ENCODE measurements at regions of chrX and their contacts with region 1.

Region 1: GRCh38 chrX:69285881-69286564 is 120.8 kb upstream of the PJA1 start:
- DNase-seq: peak; percentile 50 to 69
- ATAC-seq: peak; percentile 60 to 88 (median 62)
- H3K4me3 ChIP-seq: peak overlapping the region; percentile 12
- H3K4me3 Mint-ChIP-seq: no peak overlapping the region
- H3K27ac ChIP-seq: no peak overlapping the region
- H3K27ac Mint-ChIP-seq: no peak overlapping the region
- H3K4me1 ChIP-seq: peaks cover 8% of the 10 kb centered on the region
- H3K4me1 Mint-ChIP-seq: no peaks in the 10 kb centered on the region
- H3K27me3 ChIP-seq: no peaks in the 10 kb centered on the region
- H3K27me3 Mint-ChIP-seq: no peaks in the 10 kb centered on the region
- CTCF ChIP-seq: peak; percentile 69

Region 2: DNA sequence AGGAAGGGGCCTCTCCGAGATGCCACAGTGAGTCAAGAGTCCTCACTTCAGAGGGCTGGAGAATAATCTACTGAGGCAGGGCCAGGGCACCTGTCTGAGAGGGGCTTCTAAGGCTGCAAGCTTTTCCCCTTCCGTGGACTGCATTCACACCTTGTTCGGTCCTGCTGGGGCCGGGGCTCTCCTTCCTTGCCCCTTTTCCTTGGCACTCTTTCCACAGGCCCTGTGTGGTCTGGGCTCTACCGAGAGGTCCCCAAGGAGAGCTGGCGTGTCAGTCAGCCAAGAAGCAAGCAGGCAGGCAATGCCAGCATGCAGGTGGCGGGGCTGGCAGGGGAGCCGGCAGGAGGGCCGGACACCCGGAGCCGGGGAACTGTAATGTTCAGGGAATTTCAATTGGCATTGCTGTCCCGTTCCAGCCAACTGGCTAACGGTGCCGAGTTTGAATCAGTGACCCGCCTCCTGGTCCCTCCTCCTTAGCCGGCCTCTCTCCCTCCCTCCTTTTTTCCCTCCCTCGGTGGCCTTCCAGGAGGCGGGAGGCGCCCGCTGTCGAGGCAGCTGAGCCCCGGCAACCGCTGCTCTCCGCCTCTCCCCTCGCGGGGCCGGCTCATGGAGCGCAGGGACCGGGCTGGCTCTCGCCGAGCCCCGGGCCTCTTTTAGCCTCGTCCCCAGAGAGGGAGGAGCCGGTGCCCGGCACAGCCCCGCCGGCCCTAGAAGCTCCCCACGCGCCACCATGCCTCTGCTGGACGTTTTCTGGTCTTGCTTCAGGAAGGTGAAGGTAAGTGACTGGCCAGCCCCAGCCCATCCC is 638.7 kb before region 1 on chrX and contains the start of gene STARD8:
- intact Hi-C with region 1: no loop called
- DNase-seq: no peak
- ATAC-seq: no peak
- H3K4me3 ChIP-seq: no peak within 1 kb of the TSS
- H3K4me3 Mint-ChIP-seq: no peak within 1 kb of the TSS
- H3K27ac ChIP-seq: no peak within 1 kb of the TSS
- H3K27ac Mint-ChIP-seq: no peak within 1 kb of the TSS
- H3K4me1 ChIP-seq: no peaks in the 10 kb centered on the region
- H3K4me1 Mint-ChIP-seq: no peaks in the 10 kb centered on the region
- H3K27me3 ChIP-seq: no peaks in the 10 kb centered on the region
- H3K27me3 Mint-ChIP-seq: peaks cover 2 to 21% of the 10 kb centered on the region in 2 donors
- CTCF ChIP-seq: no peak
- total RNA-seq, gene STARD8: 0.97 to 1.3 (median 1.1) TPM

Region 3: GRCh38 chrX:68732906-68733493 is 553.0 kb before region 1 on chrX:
- intact Hi-C with region 1: loop called (anchors 5 kb)
- DNase-seq: peak; percentile 37 to 69
- ATAC-seq: peak in 2 of 3 donors; percentile 74 to 89
- H3K4me3 ChIP-seq: no peak overlapping the region
- H3K4me3 Mint-ChIP-seq: no peak overlapping the region
- H3K27ac ChIP-seq: no peak overlapping the region
- H3K27ac Mint-ChIP-seq: no peak overlapping the region
- H3K4me1 ChIP-seq: no peaks in the 10 kb centered on the region
- H3K4me1 Mint-ChIP-seq: no peaks in the 10 kb centered on the region
- H3K27me3 ChIP-seq: no peaks in the 10 kb centered on the region
- H3K27me3 Mint-ChIP-seq: peaks cover 4 to 27% of the 10 kb centered on the region in 2 donors
- CTCF ChIP-seq: peak; percentile 44

Region 4: GRCh38 chrX:68828740-68829552 is 457.1 kb before region 1 on chrX and contains the start of gene EFNB1:
- intact Hi-C with region 1: loop called (anchors 1 kb)
- DNase-seq: peak; percentile 76 to 92
- ATAC-seq: peak; percentile 95 to 99 (median 95)
- H3K4me3 ChIP-seq: peak within 1 kb of the TSS; percentile 76
- H3K4me3 Mint-ChIP-seq: peak within 1 kb of the TSS; percentile 90
- H3K27ac ChIP-seq: peak within 1 kb of the TSS; percentile 26
- H3K27ac Mint-ChIP-seq: peak within 1 kb of the TSS; percentile 59 to 84
- H3K4me1 ChIP-seq: peaks cover 36% of the 10 kb centered on the region
- H3K4me1 Mint-ChIP-seq: peaks cover 5 to 34% of the 10 kb centered on the region in 2 donors
- H3K27me3 ChIP-seq: peaks cover 3% of the 10 kb centered on the region
- H3K27me3 Mint-ChIP-seq: peaks cover 0 to 3% of the 10 kb centered on the region in 2 donors
- CTCF ChIP-seq: no peak
- total RNA-seq, gene EFNB1: 3.2 to 4.7 (median 3.3) TPM

Measured in natural killer cell (primary cell).